ENCODE measurements at regions of chr7 and their contacts with region 1.

Region 1: GRCh38 chr7:1473864-1474512 is 14.7 kb upstream of the MICALL2 start:
- DNase-seq: peak; percentile 82 to 95 (median 91)
- H3K4me3 ChIP-seq: no peak overlapping the region
- H3K27ac ChIP-seq: no peak overlapping the region
- H3K4me1 ChIP-seq: peaks cover 0 to 3% of the 10 kb centered on the region in 2 donors
- H3K27me3 ChIP-seq: no peaks in the 10 kb centered on the region
- CTCF ChIP-seq: peak; percentile 82 to 98 (median 93)
- POLR2A ChIP-seq: no peak

Region 2: GRCh38 chr7:1193593-1194424 is 280.2 kb before region 1 on chr7:
- intact Hi-C with region 1: loop called (anchors 5 kb)
- DNase-seq: peak; percentile 65 to 83 (median 76)
- H3K4me3 ChIP-seq: no peak overlapping the region
- H3K27ac ChIP-seq: no peak overlapping the region
- H3K4me1 ChIP-seq: no peaks in the 10 kb centered on the region
- H3K27me3 ChIP-seq: peaks cover 31% of the 10 kb centered on the region
- CTCF ChIP-seq: peak; percentile 26 to 78 (median 60)
- POLR2A ChIP-seq: no peak

Region 3: GRCh38 chr7:1225441-1226185 is 248.4 kb before region 1 on chr7:
- intact Hi-C with region 1: loop called in 1 of 2 experiments (anchors 5 kb)
- DNase-seq: no peak
- H3K4me3 ChIP-seq: no peak overlapping the region
- H3K27ac ChIP-seq: no peak overlapping the region
- H3K4me1 ChIP-seq: no peaks in the 10 kb centered on the region
- H3K27me3 ChIP-seq: peaks cover 93% of the 10 kb centered on the region
- CTCF ChIP-seq: peak in 5 of 6 experiments; percentile 22 to 61 (median 39)
- POLR2A ChIP-seq: no peak

Region 4: GRCh38 chr7:1439373-1440363 is 34.3 kb before region 1 on chr7:
- intact Hi-C with region 1: loop called (anchors 5 kb)
- DNase-seq: no peak
- H3K4me3 ChIP-seq: no peak overlapping the region
- H3K27ac ChIP-seq: no peak overlapping the region
- H3K4me1 ChIP-seq: peaks cover 4 to 11% of the 10 kb centered on the region in 2 donors
- H3K27me3 ChIP-seq: no peaks in the 10 kb centered on the region
- CTCF ChIP-seq: peak in 2 of 6 experiments; percentile 4 to 16
- POLR2A ChIP-seq: no peak